Activated CD4-positive, alpha-beta memory T cell treated with anti-CD3 and anti-CD28 coated beads, Interleukin-2, amount 10 ng/mL, durations not matched to agents 7 days and 5 days (primary cell): ENCODE measurements at regions of chr11 and their contacts with region 1.

Region 1: GRCh38 chr11:2420502-2421225 is 20.1 kb downstream of the TSSC4 start:
- DNase-seq: peak; percentile 70
- H3K4me3 Mint-ChIP-seq: no peak overlapping the region
- H3K27ac Mint-ChIP-seq: no peak overlapping the region
- H3K4me1 Mint-ChIP-seq: peaks cover 1% of the 10 kb centered on the region
- H3K27me3 Mint-ChIP-seq: no peaks in the 10 kb centered on the region

Region 2: DNA sequence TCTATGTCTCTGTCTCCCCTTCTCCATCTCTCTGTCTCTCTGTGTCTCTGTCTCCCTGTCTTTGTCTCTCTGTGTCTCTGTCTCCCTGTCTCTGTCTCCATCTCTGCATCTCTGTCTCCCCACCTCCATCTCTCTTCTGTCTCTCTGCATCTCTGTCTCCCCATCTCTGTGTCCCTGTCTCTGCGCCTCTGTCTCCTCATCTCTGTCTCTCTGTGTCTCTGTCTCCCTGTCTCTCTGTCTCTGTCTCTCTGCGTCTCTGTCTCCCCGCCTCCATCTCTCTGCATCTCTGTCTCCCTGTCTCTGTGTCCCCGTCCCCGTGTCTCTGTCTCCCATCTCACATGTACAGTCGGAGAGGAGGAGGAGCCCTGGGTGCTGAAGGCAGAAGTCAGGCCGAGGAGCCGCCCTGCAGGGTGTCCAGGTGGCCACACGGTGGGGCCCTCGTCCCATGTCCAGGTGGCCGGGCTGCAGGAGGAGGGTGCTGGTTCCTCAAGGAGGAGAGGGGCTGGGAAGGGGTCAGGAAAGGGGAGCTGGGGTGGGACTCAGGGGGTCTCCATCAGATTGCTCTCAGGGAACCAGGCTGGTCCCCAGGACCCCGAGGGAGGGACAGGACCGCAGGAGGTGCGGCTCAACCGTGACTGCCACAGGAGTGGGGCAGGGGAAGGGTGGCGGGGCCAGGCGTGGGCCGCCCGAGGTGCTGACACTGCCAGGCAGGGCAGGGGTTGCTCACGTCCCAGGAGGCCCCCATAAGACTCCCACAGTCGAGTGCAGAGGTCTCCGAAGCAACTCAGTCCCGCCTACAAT is 223.5 kb before region 1 on chr11:
- CTCF ChIA-PET with region 1: interaction called, 27 read pairs
- POLR2A ChIA-PET with region 1: no interaction called
- DNase-seq: peak; percentile 81
- H3K4me3 Mint-ChIP-seq: no peak overlapping the region
- H3K27ac Mint-ChIP-seq: no peak overlapping the region
- H3K4me1 Mint-ChIP-seq: peaks cover 3% of the 10 kb centered on the region
- H3K27me3 Mint-ChIP-seq: peaks cover 14% of the 10 kb centered on the region

Region 3: GRCh38 chr11:2387266-2387987 is 33.2 kb before region 1 on chr11:
- CTCF ChIA-PET with region 1: interaction called, 11 read pairs
- POLR2A ChIA-PET with region 1: no interaction called
- DNase-seq: peak; percentile 42
- H3K4me3 Mint-ChIP-seq: no peak overlapping the region
- H3K27ac Mint-ChIP-seq: peak overlapping the region; percentile 76
- H3K4me1 Mint-ChIP-seq: peaks cover 67% of the 10 kb centered on the region
- H3K27me3 Mint-ChIP-seq: no peaks in the 10 kb centered on the region